ENCODE measurements at regions of chr21 and their contacts with region 1.

Region 1: DNA sequence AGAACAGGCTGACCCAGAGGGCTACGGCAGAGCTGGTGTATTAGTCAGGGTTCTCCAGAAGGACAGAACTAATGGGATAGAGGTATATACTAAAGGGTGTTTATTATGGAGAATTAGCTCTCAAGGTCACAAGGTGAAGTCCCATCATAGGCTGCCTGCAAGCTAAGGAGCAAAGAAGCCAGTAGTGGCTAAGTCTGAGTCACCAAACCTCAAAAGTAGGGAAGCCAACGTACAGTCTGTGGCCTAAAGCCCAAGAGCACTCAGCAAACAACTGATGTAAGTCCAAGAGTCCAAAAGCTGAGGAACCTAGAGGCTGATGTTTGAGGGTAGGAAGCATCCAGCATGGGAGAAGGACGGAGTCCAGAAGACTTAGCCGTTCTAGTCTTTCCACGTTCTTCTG is 179.2 kb downstream of the BACH1 start:
- DNase-seq: no peak
- ATAC-seq: no peak

Region 2: DNA sequence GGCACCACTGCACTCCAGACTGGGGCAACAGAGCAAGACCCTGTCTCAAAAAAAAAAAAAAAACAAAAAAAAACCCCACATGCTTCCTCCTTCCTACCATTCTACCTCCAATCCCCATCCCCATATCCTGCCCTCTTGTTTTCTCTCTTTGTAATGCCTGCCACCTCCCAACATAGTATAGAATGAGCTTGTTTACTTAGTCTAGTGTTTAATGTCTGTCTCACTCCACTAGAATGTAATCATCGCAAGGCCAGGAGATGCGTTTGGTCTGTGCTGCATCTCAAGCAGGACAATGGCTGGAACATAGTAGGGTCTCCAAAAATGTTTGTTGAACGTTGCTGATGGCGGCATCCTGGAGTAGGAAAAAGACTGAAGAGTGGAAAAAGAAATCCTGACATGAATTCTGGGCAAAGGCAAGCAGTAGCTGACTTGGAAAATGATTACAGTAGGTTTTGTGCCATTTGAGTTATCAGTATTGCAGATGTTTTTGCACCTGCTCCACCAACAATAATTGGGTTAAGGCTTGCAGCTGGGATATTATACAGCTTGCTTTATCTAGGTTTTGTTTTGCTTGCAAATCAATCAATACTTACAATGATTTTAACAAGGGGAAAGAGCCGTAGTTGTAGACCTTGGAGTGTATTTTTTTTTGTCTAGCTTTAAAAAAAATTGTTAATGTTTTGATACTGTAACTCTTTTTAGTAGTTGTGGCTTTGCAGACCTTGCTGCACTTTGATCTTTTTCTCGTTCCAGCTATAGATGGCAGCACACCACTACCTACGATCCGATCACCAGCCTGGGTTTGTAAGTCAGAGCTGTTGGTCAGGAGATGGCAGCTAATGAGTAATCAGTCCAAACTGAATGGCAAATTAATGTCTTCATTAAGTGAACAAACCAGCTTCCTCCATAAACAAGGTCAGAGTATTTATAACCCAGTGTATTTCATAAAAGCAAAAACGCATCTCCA is 116.9 kb before region 1 on chr21:
- intact Hi-C with region 1: no loop called
- DNase-seq: no peak
- ATAC-seq: no peak

Region 3: DNA sequence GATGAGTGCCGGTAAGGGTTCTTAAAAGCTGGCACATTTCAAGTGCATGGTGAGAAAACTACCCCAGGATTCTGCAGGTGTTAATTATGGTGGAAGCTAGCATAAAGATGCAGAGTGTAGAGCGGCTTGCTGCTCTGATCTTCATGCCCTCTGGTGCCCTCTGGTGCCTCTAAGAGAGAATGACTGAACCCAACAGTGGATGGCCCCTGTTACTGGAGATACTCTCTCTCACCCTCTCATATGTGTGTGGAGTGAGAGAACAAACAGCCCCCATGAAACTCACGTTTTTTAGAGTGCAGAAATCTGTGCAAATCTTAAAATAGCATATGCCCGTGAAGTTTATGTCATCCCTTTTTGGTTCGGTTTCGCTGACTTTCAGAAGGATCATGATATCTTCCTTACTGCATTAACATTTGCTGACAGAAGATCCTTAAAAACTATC is 371.8 kb after region 1 on chr21:
- intact Hi-C with region 1: loop called (anchors 5 kb)
- DNase-seq: no peak
- ATAC-seq: peak; percentile 86